ENCODE measurements at regions of chr4 and their contacts with region 1.

Region 1: GRCh38 chr4:141133146-141133998 is at the start of gene RNF150:
- DNase-seq: peak; percentile 87
- H3K4me3 ChIP-seq: peak within 1 kb of the TSS; percentile 80 to 97
- H3K27ac ChIP-seq: peak within 1 kb of the TSS; percentile 53 to 95
- H3K4me1 ChIP-seq: peaks cover 0 to 16% of the 10 kb centered on the region in 2 experiments; a peak in 2 of 4 replicates
- H3K27me3 ChIP-seq: no peaks in the 10 kb centered on the region
- CTCF ChIP-seq: peak; percentile 91
- EP300 ChIP-seq: 0 out of 4 replicates have a peak, but pooled peaks of 1 of the 2 experiments have one; percentile 16
- RAD21 ChIP-seq: peak; percentile 98
- polyA plus RNA-seq, gene RNF150: 5.8 and 8.8 TPM in 2 replicates

Region 2: DNA sequence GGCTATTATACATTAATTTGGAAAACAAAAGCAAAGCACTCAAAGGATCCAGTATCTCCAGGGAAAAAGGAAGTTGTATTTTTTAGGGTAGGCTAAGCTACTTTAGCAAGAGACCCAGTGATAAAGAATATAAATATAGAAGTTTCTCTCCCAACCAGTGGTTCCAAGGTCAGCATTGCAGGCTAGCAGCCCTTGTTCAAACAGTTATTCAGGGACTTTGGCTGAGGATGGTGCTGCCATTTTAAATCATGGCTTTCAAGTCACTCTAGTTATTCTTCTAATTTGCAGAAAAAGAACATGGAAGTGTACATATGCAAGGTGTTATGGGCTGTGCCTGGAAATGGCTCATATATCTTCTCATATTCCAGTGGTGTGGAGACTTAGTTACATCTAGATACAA is 750.6 kb before region 1 on chr4:
- CTCF ChIA-PET with region 1: no interaction called
- POLR2A ChIA-PET with region 1: no interaction called
- DNase-seq: no peak
- H3K4me3 ChIP-seq: no peak overlapping the region
- H3K27ac ChIP-seq: no peak overlapping the region
- H3K4me1 ChIP-seq: peaks cover 0 to under 1% of the 10 kb centered on the region in 2 experiments; a peak in 2 of 4 replicates
- H3K27me3 ChIP-seq: no peaks in the 10 kb centered on the region
- CTCF ChIP-seq: no peak
- EP300 ChIP-seq: no peak
- RAD21 ChIP-seq: no peak

Region 3: DNA sequence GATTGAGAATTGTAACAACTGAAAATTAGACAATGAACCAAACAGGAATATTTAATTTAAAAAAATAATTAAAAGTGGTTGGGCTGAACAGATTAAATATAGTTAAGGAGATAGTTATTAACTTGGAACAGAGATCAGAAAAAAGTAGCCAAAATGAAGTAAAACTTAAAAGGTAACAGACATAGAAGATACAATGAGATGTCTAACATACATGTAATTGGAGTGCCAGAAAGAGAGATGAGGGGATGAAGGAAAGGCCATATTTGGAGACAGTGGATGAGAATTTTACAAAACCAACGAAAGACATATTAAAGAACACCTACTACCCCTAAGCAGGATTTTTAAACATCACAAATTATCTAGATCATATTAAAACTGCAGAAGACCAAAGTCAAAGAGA is 385.2 kb before region 1 on chr4:
- CTCF ChIA-PET with region 1: no interaction called
- POLR2A ChIA-PET with region 1: no interaction called
- DNase-seq: no peak
- H3K4me3 ChIP-seq: no peak overlapping the region
- H3K27ac ChIP-seq: no peak overlapping the region
- H3K4me1 ChIP-seq: peaks cover 11 to 12% of the 10 kb centered on the region in 2 experiments
- H3K27me3 ChIP-seq: no peaks in the 10 kb centered on the region
- CTCF ChIP-seq: no peak
- EP300 ChIP-seq: no peak
- RAD21 ChIP-seq: no peak

Region 4: DNA sequence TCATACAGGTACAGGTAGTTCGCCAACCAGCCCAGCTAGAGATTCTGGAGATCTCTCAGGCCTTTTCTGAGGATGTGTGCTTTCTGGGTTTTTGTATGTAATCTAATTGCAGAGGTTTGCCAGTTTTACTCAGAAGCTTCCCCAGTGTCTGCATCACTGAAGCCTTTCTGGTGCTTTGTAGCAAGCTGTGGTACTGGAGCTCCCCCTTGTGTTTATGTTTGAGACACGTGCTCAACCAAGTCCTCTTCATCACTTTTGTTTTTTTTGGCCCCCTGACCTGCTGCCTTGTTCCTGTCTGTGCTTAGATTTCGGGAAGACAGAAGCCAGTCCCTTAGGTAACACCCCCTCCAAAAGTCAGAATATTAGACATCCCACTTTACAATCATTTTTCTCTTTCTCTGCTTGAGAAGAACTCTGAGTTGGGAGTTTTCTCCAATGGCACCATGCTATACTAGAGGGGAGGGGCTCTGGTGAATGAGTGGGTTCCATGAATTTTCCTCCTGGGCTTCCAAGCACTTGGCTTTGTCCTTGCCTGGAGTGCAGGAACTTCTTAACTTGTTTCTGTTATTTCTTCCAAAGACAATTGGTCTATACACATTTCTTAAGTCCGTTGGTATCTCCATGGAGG is 248.8 kb before region 1 on chr4:
- CTCF ChIA-PET with region 1: interaction called, 12 read pairs
- POLR2A ChIA-PET with region 1: no interaction called
- DNase-seq: peak; percentile 39
- H3K4me3 ChIP-seq: no peak overlapping the region; a peak in 1 of 4 replicates
- H3K27ac ChIP-seq: peak overlapping the region in 1 of 2 experiments; percentile 11; a peak in 1 of 4 replicates
- H3K4me1 ChIP-seq: no peaks in the 10 kb centered on the region; a peak in 1 of 4 replicates
- H3K27me3 ChIP-seq: no peaks in the 10 kb centered on the region
- CTCF ChIP-seq: peak; percentile 53
- EP300 ChIP-seq: no peak
- RAD21 ChIP-seq: peak; percentile 66

Region 5: DNA sequence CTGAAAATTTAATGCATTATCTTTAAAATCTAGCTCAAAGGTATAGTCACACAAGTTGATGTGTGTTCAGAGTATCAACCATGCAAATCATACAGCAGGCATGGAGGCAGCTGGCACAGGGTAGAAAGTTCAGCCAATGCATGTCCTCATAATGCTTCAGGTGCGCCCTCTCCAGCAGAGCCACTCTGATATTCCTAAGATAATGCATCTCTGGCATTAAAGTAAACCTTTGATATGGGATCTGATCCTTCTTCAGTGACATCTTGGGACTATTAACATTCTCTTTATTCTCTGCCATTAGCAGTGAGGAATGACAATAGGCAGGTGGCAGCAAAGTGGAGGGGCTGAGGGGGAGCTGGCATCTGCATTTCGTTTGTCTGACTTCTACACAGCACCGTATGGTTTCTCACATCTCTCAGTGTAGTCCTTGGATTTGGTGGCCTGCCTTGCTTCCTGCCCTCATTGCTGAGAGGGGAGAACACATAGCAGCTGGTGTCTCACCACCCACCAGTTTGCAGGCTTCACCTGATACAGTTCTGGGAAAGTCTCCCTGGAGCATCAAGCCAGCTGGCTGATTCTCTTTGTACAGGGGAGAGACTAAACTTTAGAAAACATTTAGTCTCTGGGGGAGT is 208.5 kb before region 1 on chr4:
- CTCF ChIA-PET with region 1: interaction called, 18 read pairs
- POLR2A ChIA-PET with region 1: interaction called, 6 read pairs
- DNase-seq: peak; percentile 36
- H3K4me3 ChIP-seq: no peak overlapping the region
- H3K27ac ChIP-seq: peak overlapping the region in 1 of 2 experiments; percentile 91; a peak in 2 of 4 replicates
- H3K4me1 ChIP-seq: peaks cover 3 to 22% of the 10 kb centered on the region in 2 experiments; a peak in 3 of 4 replicates
- H3K27me3 ChIP-seq: no peaks in the 10 kb centered on the region
- CTCF ChIP-seq: no peak
- EP300 ChIP-seq: peak in 1 of 2 experiments; percentile 68; a peak in 1 of 4 replicates
- RAD21 ChIP-seq: peak; percentile 57

Region 6: GRCh38 chr4:140971077-140971792 is 162.1 kb before region 1 on chr4:
- CTCF ChIA-PET with region 1: interaction called, 23 read pairs
- POLR2A ChIA-PET with region 1: interaction called, 10 read pairs
- DNase-seq: peak; percentile 35
- H3K4me3 ChIP-seq: no peak overlapping the region; a peak in 1 of 4 replicates
- H3K27ac ChIP-seq: peak overlapping the region in 1 of 2 experiments; percentile 95; a peak in 2 of 4 replicates
- H3K4me1 ChIP-seq: peaks cover 0 to 20% of the 10 kb centered on the region in 2 experiments; a peak in 2 of 4 replicates
- H3K27me3 ChIP-seq: no peaks in the 10 kb centered on the region
- CTCF ChIP-seq: no peak
- EP300 ChIP-seq: peak in 1 of 2 experiments; percentile 95; a peak in 2 of 4 replicates
- RAD21 ChIP-seq: peak; percentile 40

Region 7: GRCh38 chr4:141090473-141090872 is 42.9 kb before region 1 on chr4:
- CTCF ChIA-PET with region 1: interaction called, 12 read pairs
- POLR2A ChIA-PET with region 1: interaction called, 3 read pairs
- DNase-seq: no peak
- H3K4me3 ChIP-seq: no peak overlapping the region
- H3K27ac ChIP-seq: no peak overlapping the region; a peak in 1 of 4 replicates
- H3K4me1 ChIP-seq: no peaks in the 10 kb centered on the region; a peak in 1 of 4 replicates
- H3K27me3 ChIP-seq: no peaks in the 10 kb centered on the region
- CTCF ChIP-seq: no peak
- EP300 ChIP-seq: no peak
- RAD21 ChIP-seq: no peak

Region 8: DNA sequence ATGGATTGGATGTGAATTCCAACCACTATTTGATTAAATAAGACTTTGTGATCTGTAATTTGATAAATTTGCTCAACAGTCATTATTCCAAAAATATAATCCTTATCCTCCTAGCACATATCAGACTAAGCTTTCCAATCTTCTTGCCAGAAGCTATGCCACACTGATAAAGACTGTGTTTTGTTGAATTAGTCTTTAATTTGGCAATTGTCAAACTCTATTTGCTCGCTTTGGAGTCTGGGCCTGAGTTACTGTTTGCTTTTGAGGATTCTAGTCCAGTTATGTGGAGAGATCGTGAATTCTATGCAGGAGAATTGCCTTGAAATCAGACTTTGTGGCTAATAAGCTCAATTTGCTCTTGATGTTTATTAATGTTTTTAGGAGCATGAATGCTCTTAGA is 10.8 kb after region 1 on chr4:
- CTCF ChIA-PET with region 1: interaction called, 32 read pairs
- POLR2A ChIA-PET with region 1: no interaction called
- DNase-seq: no peak
- H3K4me3 ChIP-seq: no peak overlapping the region
- H3K27ac ChIP-seq: no peak overlapping the region; a peak in 1 of 4 replicates
- H3K4me1 ChIP-seq: peaks cover 2 to 7% of the 10 kb centered on the region in 2 experiments; a peak in 2 of 4 replicates
- H3K27me3 ChIP-seq: no peaks in the 10 kb centered on the region
- CTCF ChIP-seq: no peak
- EP300 ChIP-seq: no peak
- RAD21 ChIP-seq: no peak

Region 9: GRCh38 chr4:142036795-142037583 is 903.6 kb after region 1 on chr4:
- CTCF ChIA-PET with region 1: no interaction called
- POLR2A ChIA-PET with region 1: no interaction called
- DNase-seq: no peak
- H3K4me3 ChIP-seq: no peak overlapping the region
- H3K27ac ChIP-seq: no peak overlapping the region; a peak in 1 of 4 replicates
- H3K4me1 ChIP-seq: peaks cover 0 to 6% of the 10 kb centered on the region in 2 experiments; a peak in 1 of 4 replicates
- H3K27me3 ChIP-seq: no peaks in the 10 kb centered on the region
- CTCF ChIP-seq: no peak
- EP300 ChIP-seq: no peak
- RAD21 ChIP-seq: no peak